ENCODE measurements at regions of chr7 and their contacts with region 1.

Region 1: DNA sequence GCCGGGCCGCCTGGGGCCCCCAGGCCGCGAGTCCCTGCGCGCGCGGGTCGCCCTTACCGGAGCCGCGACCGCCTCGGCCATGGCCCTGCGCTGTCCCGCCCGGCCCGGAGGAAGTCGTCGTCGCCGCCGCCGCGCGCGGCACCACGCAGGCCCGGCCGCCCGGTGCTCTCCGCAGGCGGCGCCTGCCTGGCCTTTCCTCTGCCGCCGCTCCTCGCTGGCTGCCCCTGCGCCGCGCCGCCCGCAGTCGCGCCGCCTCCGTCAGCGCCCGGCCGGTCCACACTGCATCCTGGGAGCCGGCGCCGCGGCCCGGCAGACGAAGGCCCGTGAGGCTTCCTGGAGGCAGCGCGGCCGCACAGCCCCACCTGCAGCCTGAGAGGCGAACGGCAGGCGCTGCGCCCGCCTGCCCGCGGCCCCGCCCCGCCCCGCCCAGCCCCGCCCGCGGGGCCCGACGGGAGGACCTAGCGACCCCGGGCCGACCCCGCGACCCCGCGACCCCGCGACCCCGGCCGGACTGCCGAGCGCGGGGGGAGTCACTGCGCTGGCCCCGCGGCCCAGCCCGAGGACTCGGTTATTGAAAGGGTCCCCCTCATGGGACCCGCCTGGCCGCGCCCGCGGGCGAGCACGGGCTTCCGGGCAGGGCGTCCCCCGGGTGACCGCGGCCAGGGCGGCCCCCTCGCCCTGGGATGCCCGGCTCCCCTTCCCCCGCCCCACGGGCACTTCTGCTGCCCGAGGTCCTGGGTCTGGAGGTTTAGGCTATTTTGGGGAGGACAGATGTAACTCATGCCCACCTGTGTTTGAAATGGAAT is at the start of gene ZNF746:
- DNase-seq: peak; percentile 96
- ATAC-seq: peak; percentile 93
- total RNA-seq, gene ZNF746: 8.4 TPM

Region 2: DNA sequence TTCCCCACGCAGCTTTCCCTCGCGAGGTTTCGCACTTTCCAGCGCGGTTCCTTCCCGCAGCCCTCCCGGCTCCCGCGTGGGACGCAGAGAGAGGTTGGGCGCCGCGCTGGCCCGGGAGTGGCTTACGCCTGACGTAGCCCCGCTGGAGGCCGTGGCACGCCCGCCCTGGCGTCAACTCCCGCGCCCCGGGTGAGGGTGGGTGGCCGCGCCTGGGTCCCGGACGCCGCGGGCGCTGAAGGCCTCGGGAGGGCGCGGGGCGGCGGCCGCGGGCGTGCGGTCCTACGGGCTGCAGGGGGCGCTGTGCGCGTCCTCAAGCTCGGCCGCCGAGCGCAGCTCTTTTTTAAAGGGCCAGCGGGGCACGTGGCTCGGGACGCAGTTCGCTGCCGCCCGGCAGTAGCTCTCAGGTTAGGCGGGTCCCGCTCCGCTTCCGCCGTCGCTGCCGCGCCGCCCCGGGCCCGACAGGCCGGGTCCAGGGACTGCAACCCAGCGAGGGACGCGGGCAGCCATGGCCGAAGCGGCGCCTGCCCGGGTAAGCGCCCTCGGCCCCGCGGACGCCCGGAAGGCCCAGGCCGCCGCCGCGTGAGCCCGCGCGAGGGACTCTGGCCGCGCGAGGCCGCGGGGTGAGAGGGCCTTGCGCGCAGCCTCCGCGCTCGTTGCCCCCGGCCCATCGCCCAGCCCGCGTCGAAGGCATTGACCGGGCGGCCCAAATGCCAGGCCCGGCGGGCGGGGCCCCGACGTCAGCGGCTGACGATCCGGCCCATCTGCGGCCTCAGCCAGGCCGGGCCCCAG is 235.6 kb before region 1 on chr7 and contains the start of gene ZNF783:
- intact Hi-C with region 1: loop called (anchors 5 kb)
- DNase-seq: peak; percentile 94
- ATAC-seq: peak; percentile 97
- total RNA-seq, gene ZNF783: 4.3 TPM